ENCODE measurements at regions of chr22 and their contacts with region 1.

Region 1: GRCh38 chr22:28247667-28248363 is 328.8 kb upstream of the PITPNB start:
- DNase-seq: peak; percentile 46
- H3K4me3 ChIP-seq: no peak overlapping the region
- H3K27ac ChIP-seq: peak overlapping the region in 1 of 2 experiments; percentile 88; a peak in 2 of 4 replicates
- H3K4me1 ChIP-seq: peaks cover 34 to 50% of the 10 kb centered on the region in 2 experiments; a peak in 3 of 4 replicates
- H3K27me3 ChIP-seq: no peaks in the 10 kb centered on the region
- CTCF ChIP-seq: no peak
- EP300 ChIP-seq: peak in 1 of 2 experiments; percentile 58; a peak in 1 of 4 replicates
- RAD21 ChIP-seq: peak; percentile 20; the same call in 1 of the 2 replicates

Region 2: GRCh38 chr22:28268171-28268570 is 20.4 kb after region 1 on chr22:
- CTCF ChIA-PET with region 1: interaction called, 14 read pairs
- POLR2A ChIA-PET with region 1: no interaction called
- DNase-seq: no peak
- H3K4me3 ChIP-seq: no peak overlapping the region
- H3K27ac ChIP-seq: no peak overlapping the region
- H3K4me1 ChIP-seq: peaks cover 0 to 4% of the 10 kb centered on the region in 2 experiments; a peak in 1 of 4 replicates
- H3K27me3 ChIP-seq: no peaks in the 10 kb centered on the region
- CTCF ChIP-seq: no peak
- EP300 ChIP-seq: no peak
- RAD21 ChIP-seq: no peak

Region 3: GRCh38 chr22:28442264-28442710 is 194.5 kb after region 1 on chr22:
- CTCF ChIA-PET with region 1: interaction called, 18 read pairs
- POLR2A ChIA-PET with region 1: no interaction called
- DNase-seq: peak; percentile 91
- H3K4me3 ChIP-seq: peak overlapping the region; percentile 67 to 76
- H3K27ac ChIP-seq: peak overlapping the region; percentile 62 to 91; a peak in 3 of 4 replicates
- H3K4me1 ChIP-seq: peaks cover 13 to 27% of the 10 kb centered on the region in 2 experiments; a peak in 3 of 4 replicates
- H3K27me3 ChIP-seq: no peaks in the 10 kb centered on the region
- CTCF ChIP-seq: peak; percentile 80
- EP300 ChIP-seq: peak in 1 of 2 experiments; percentile 37; a peak in 1 of 4 replicates
- RAD21 ChIP-seq: peak; percentile 87

Measured in SK-N-SH (cell line).